ENCODE measurements at regions of chr15 and their contacts with region 1.

Region 1: GRCh38 chr15:43225201-43225949 is 4.6 kb upstream of the EPB42 start:
- DNase-seq: peak; percentile 63
- H3K4me3 Mint-ChIP-seq: no peak overlapping the region
- H3K27ac Mint-ChIP-seq: no peak overlapping the region
- H3K4me1 Mint-ChIP-seq: peaks cover 5% of the 10 kb centered on the region
- H3K27me3 Mint-ChIP-seq: peaks cover 3% of the 10 kb centered on the region

Region 2: GRCh38 chr15:43118829-43119228 is 106.5 kb before region 1 on chr15:
- CTCF ChIA-PET with region 1: no interaction called
- intact Hi-C with region 1: no loop called
- DNase-seq: no peak
- H3K4me3 Mint-ChIP-seq: no peak overlapping the region
- H3K27ac Mint-ChIP-seq: no peak overlapping the region
- H3K4me1 Mint-ChIP-seq: peaks cover 12% of the 10 kb centered on the region
- H3K27me3 Mint-ChIP-seq: peaks cover 9% of the 10 kb centered on the region

Region 3: DNA sequence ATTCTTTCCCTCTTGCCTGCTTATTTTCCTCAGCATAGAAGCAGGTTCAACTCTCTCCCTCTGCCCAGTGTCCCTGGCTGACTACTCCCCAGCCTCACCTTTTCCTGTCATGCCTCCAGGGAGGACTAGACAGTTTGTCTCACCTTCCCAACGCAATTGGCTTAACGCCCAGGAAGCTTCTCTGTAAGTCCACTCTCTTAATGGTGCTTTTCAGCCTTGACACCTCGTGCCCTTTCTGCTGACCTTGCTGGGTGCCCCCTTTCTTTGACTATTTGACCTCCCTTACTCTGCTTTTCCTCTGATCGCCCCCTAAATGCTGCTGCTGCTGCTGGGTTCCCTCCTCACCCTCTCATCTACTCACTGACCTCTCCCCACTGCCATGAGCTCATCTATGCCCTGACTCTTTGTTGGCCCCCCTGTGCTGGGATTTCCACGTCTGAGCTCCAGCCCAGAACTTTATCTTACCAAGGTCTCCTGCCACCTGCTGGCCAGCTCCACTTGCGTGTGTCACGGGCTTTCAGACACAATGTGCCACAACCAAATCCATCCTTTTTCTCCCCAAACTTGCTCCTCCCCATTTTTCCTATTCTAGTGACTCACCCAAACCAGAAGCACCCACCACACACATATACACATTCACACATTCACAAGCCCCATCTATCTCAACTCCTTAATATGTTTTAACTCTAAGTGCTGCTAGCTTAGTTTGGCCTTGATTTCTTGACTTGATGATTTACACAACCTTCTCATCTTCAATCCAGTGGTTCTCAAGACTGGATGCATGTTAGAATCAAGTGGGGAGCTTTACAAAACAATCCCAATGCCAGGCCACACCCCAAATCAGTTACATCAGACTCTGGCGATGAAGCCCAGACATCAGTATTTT is 21.1 kb before region 1 on chr15:
- CTCF ChIA-PET with region 1: interaction called, 19 read pairs
- intact Hi-C with region 1: no loop called
- DNase-seq: peak; percentile 75
- H3K4me3 Mint-ChIP-seq: no peak overlapping the region
- H3K27ac Mint-ChIP-seq: no peak overlapping the region
- H3K4me1 Mint-ChIP-seq: peaks cover 5% of the 10 kb centered on the region
- H3K27me3 Mint-ChIP-seq: peaks cover 5% of the 10 kb centered on the region

Region 4: GRCh38 chr15:43244092-43244491 is 18.7 kb after region 1 on chr15:
- CTCF ChIA-PET with region 1: interaction called, 11 read pairs
- intact Hi-C with region 1: no loop called
- DNase-seq: no peak
- H3K4me3 Mint-ChIP-seq: no peak overlapping the region
- H3K27ac Mint-ChIP-seq: no peak overlapping the region
- H3K4me1 Mint-ChIP-seq: no peaks in the 10 kb centered on the region
- H3K27me3 Mint-ChIP-seq: no peaks in the 10 kb centered on the region

Region 5: DNA sequence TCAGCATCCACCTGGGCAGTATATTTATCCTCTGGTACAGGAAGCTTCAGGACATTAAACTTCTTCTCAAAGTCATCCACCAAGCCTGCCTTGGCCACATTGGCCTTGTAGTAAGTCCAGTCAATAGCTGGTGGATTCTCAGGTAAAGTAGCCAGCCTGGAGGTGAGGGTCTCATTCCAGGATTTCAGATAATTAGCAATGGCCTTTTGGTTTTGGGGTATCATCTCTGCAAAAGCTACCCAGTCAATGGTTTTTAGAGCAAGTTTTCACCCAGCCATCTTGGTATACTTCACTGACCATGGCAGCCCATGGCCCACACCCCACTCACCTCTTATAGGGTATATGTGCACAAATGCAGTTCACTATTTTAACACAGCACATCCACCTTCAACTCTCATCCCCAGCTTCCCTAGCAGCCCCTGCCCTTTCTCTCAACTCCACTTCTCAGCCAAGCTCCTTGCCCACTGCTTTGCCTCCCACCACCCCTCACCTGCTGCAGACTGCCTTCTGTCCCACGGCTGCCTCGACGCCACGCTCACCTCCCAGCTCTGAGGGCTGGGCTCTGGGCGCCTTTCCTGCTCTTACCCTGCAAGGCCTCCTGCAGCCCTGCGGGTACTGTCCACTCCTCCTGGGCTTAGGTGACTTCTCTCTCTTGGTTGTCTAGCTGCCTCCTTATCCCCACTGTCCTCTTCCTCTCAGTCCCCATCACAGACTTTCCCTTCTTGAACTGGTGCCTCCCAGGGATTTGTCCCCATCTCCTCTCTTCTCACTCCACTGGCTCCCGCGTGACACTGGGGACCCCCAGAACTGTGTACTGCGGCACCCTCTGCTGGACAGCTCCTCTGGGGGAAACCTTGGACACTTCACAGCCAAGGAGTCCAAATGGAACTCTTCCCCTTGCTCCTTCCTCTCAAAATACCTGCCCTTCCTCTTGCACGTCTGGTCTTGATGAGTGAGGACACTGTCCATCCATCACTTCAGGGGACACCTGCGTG is 43.0 kb after region 1 on chr15:
- CTCF ChIA-PET with region 1: interaction called, 26 read pairs
- intact Hi-C with region 1: loop called (anchors 1 kb)
- DNase-seq: peak; percentile 47
- H3K4me3 Mint-ChIP-seq: no peak overlapping the region
- H3K27ac Mint-ChIP-seq: no peak overlapping the region
- H3K4me1 Mint-ChIP-seq: peaks cover 1% of the 10 kb centered on the region
- H3K27me3 Mint-ChIP-seq: peaks cover 3% of the 10 kb centered on the region

Region 6: DNA sequence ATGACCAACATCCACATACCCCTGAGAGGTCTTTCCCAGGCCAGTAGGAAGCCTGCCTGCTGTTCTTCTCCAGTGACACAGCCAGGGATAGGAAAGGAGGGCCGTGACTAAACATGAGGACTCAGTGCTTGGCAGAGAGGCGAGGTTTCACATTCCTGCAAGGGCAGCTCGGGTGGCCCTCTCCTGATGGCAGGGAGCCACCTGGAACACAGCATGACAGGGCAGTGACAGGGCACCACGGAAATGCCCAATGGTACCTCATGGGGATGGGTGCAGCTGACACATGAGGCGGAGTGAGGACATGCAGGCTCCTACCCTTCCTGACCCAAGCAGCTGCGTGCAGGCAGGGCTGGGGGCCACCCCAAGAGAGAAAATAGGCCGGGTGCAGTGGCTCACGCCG is 48.8 kb after region 1 on chr15:
- CTCF ChIA-PET with region 1: interaction called, 26 read pairs
- intact Hi-C with region 1: no loop called
- DNase-seq: no peak
- H3K4me3 Mint-ChIP-seq: no peak overlapping the region
- H3K27ac Mint-ChIP-seq: no peak overlapping the region
- H3K4me1 Mint-ChIP-seq: peaks cover 1% of the 10 kb centered on the region
- H3K27me3 Mint-ChIP-seq: peaks cover 7% of the 10 kb centered on the region

Region 7: GRCh38 chr15:43279491-43279890 is 54.1 kb after region 1 on chr15:
- CTCF ChIA-PET with region 1: interaction called, 167 read pairs
- intact Hi-C with region 1: no loop called
- DNase-seq: no peak
- H3K4me3 Mint-ChIP-seq: no peak overlapping the region
- H3K27ac Mint-ChIP-seq: no peak overlapping the region
- H3K4me1 Mint-ChIP-seq: no peaks in the 10 kb centered on the region
- H3K27me3 Mint-ChIP-seq: peaks cover 3% of the 10 kb centered on the region

Region 8: GRCh38 chr15:43285609-43286037 is 60.2 kb after region 1 on chr15:
- CTCF ChIA-PET with region 1: interaction called, 167 read pairs
- intact Hi-C with region 1: loop called (anchors 1 kb)
- DNase-seq: peak; percentile 75
- H3K4me3 Mint-ChIP-seq: no peak overlapping the region
- H3K27ac Mint-ChIP-seq: no peak overlapping the region
- H3K4me1 Mint-ChIP-seq: no peaks in the 10 kb centered on the region
- H3K27me3 Mint-ChIP-seq: peaks cover under 1% of the 10 kb centered on the region

Measured in activated naive CD4-positive, alpha-beta T cell treated with anti-CD3 and anti-CD28 coated beads for 36 hours (primary cell).